Activated CD4-positive, alpha-beta memory T cell treated with anti-CD3 and anti-CD28 coated beads, Interleukin-2, amount 10 ng/mL, durations not matched to agents 7 days and 5 days (primary cell): ENCODE measurements at regions of chr11 and their contacts with region 1.

Region 1: GRCh38 chr11:9573052-9573774 is at the start of gene WEE1:
- DNase-seq: peak; percentile 98
- H3K4me3 Mint-ChIP-seq: peak within 1 kb of the TSS; percentile 98
- H3K27ac Mint-ChIP-seq: peak within 1 kb of the TSS; percentile 83
- H3K4me1 Mint-ChIP-seq: peaks cover 37% of the 10 kb centered on the region
- H3K27me3 Mint-ChIP-seq: peaks cover 2% of the 10 kb centered on the region
- total RNA-seq, gene WEE1: 62.8 to 64.1 TPM

Region 2: DNA sequence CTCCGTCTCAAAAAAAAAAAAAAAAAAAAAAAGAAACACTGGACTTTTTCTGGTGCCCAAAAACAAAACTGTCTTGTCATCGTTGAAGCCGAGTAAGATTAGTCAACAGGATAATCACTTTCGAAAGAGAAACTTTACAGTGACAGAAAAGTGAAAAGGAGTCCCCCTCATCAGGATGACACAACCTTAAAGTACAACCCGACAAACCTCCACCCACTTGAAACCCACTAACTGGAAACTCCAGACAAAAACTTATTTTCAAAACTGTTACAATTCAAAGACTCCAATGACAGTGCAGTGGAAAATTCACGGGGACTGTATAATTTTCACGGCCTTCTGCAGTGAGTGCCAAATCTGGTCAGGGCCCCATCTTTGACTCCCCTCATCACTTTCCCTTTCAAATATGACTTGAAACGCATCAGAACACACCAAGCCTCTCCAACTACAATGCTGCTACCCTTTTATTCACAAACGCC is 309.3 kb before region 1 on chr11:
- CTCF ChIA-PET with region 1: no interaction called
- POLR2A ChIA-PET with region 1: no interaction called
- DNase-seq: peak; percentile 35
- H3K4me3 Mint-ChIP-seq: peak overlapping the region; percentile 80
- H3K27ac Mint-ChIP-seq: peak overlapping the region; percentile 68
- H3K4me1 Mint-ChIP-seq: peaks cover 36% of the 10 kb centered on the region
- H3K27me3 Mint-ChIP-seq: peaks cover 51% of the 10 kb centered on the region

Region 3: DNA sequence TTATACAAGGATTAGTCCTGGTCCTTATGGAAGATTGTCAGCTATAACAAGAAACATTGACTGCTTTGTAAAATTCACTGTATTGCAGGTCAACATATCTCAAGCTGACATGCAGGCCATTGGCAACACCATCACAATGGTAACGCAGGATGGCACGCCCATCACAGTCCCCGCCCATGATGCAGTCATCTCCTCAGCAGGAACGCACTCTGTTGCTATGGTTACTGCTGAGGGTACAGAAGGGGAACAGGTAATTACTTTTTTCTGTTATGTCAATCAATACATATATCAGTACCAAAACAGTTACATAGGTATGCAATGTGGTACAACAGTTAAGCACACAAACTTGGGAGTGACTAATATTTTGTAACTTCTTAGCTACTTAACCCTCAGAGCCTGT is 57.1 kb before region 1 on chr11:
- CTCF ChIA-PET with region 1: no interaction called
- POLR2A ChIA-PET with region 1: no interaction called
- DNase-seq: no peak
- H3K4me3 Mint-ChIP-seq: no peak overlapping the region
- H3K27ac Mint-ChIP-seq: no peak overlapping the region
- H3K4me1 Mint-ChIP-seq: peaks cover 3% of the 10 kb centered on the region
- H3K27me3 Mint-ChIP-seq: no peaks in the 10 kb centered on the region

Region 4: DNA sequence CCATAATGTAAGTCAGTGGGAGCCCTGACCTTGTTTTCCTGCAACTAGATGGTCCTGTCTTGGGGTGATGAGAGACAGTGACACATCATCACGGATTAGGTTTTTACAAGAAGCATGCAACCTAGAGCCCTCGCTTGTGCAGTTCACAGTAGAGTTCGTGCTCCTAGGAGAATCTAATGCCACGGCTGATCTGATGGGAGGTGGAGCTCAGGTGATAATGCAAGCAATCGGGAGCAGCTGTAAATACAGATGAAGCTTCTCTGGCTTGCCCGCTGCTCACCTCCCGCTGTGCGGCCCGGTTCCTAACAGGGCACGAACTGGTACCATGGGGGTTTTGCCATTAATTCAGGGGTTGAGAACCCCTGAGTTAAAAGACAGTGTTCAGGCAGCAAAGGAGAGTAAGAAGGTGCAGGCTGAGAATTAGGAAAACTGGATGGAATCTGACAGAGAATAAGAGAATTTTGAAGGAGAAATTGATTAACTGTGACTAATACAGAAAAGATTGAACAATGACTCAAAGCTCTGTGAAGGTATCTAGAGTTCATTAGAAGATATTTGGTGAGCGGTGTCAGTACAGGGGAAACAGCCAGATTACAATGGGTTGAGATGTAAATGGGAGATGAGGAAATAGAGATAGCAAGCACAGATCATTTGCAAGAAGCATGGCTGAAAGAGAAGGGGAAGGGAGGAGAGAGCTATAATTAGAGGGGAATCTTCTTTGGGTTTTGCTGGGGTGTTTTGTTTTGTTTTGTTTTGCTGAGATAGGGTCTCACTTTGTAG is 21.2 kb after region 1 on chr11:
- CTCF ChIA-PET with region 1: interaction called, 4 read pairs
- POLR2A ChIA-PET with region 1: interaction called, 23 read pairs
- DNase-seq: no peak
- H3K4me3 Mint-ChIP-seq: no peak overlapping the region
- H3K27ac Mint-ChIP-seq: no peak overlapping the region
- H3K4me1 Mint-ChIP-seq: no peaks in the 10 kb centered on the region
- H3K27me3 Mint-ChIP-seq: peaks cover 2% of the 10 kb centered on the region

Region 5: DNA sequence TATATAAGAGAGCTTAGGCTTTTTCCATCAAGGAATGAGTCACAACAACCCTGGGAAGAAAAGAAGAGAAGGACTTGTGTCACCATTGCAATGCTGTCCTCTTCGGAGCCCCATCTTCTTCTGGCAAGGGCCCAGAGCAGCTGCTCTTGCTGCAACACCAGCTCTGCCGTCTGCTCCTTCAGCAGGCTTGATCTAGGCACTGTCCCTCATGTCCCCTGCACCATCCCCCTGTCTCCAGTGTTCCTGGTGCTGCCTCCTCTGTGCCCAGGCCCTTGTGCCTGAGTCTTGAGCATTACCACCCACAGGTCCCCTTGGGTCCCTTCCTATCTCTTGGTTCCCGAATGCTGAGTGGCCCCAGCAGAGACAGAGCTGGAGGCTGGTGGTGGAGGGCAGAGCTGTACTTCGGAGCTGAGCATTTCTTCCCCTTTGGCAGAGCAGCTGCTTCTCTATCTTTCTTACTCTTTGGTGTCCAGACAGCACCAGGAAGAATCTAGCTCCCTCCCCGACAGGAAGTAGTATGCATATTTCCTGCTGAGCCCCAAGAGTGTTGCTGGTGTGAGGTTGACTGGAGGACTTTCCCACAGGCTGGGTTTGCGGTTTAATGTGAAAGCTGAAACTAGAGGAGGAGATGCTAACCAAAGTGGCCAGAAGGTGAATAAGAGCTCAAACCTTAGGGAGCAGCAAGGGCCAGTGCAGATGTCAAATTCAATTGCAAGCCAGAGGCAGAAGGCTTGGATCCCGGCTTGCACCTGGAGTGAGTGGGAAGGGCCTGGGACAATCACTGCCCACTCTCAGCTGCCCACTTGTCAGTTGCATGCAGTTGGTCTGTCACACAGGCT is 28.0 kb after region 1 on chr11:
- CTCF ChIA-PET with region 1: interaction called, 11 read pairs
- POLR2A ChIA-PET with region 1: interaction called, 51 read pairs
- DNase-seq: peak; percentile 83
- H3K4me3 Mint-ChIP-seq: peak overlapping the region; percentile 49
- H3K27ac Mint-ChIP-seq: peak overlapping the region; percentile 59
- H3K4me1 Mint-ChIP-seq: peaks cover 25% of the 10 kb centered on the region
- H3K27me3 Mint-ChIP-seq: peaks cover 19% of the 10 kb centered on the region

Region 6: DNA sequence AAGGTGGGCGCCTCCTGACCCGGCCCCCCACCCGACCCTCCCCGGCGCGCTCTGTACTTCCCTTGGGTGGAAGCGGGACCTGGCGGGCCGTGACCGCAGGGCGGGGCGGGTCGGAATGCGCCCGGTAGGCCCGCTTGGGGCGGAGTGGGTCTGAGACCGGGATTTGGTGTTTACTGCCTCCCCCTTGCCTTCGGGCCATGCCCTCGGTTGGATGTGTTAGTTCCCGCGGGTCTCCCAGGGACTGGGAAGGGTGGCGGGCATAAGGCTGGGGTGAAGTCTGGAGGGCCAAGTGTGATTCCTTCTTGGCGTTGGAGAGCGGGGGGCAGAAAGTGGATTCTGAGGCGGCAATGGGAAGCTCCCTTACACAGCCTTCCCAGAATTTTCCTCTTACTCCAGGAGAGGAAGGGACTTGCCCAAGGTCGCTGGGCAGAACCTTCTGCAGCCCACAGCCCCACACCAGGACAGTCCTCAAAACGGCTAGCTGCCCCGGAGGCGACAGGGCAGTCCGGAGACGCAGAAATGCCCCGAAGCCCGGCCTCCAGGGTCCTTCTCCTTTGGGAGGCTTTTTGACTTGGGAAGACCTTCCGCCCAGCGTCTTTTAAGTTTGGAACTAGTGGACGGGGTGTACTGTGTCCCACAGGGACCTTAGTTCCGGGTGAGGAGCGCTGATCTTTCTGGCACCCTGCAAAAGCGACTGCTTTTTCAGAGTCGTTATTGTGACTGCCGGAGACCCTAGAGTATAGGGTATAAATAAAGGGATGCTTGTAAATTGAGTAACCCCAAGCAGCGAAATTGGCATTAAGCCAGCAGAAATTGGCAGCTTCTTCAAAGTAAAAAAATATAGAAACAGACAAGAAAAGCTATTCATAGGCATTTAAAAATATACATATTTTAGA is 91.3 kb after region 1 on chr11:
- CTCF ChIA-PET with region 1: no interaction called
- POLR2A ChIA-PET with region 1: no interaction called
- DNase-seq: no peak
- H3K4me3 Mint-ChIP-seq: peak overlapping the region; percentile 81
- H3K27ac Mint-ChIP-seq: no peak overlapping the region
- H3K4me1 Mint-ChIP-seq: peaks cover 21% of the 10 kb centered on the region
- H3K27me3 Mint-ChIP-seq: peaks cover 25% of the 10 kb centered on the region

Region 7: DNA sequence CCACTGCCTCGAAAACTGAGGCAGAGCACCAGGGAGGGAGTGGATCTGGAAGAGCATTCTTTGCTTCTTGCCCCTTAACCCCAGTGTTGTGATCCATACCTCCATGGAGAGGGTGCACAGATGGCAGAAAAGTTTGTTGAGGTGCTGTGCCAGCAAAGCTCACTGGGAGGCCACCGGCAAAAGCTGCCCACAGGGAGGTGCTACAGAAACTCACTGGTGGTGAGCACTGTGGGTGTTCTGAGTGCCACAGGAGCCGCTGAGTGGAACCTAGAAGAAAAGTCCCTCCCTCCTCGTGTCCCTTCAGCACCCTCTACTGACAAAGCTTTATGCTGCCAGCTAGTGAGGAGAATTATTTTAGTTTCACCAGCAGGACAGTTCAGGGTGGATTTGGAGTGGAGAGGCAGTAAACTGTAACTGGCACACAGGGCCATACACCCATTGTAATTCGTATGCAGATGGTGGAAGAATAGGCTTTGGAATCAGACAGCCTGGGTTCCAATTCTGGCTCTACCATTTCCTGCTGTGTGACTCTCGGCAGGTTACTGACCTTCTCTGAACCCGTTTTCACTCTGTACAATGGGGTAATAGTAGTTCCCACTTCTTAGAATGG is 175.3 kb after region 1 on chr11:
- CTCF ChIA-PET with region 1: interaction called, 10 read pairs
- POLR2A ChIA-PET with region 1: no interaction called
- DNase-seq: peak; percentile 77
- H3K4me3 Mint-ChIP-seq: no peak overlapping the region
- H3K27ac Mint-ChIP-seq: no peak overlapping the region
- H3K4me1 Mint-ChIP-seq: peaks cover 22% of the 10 kb centered on the region
- H3K27me3 Mint-ChIP-seq: no peaks in the 10 kb centered on the region